Cardiac septum (tissue), 1 donor: ENCODE measurements at regions of chr6 and their contacts with region 1.

Region 1: GRCh38 chr6:44431118-44431725 is 43.7 kb downstream of the CDC5L start:
- DNase-seq: no peak

Region 2: DNA sequence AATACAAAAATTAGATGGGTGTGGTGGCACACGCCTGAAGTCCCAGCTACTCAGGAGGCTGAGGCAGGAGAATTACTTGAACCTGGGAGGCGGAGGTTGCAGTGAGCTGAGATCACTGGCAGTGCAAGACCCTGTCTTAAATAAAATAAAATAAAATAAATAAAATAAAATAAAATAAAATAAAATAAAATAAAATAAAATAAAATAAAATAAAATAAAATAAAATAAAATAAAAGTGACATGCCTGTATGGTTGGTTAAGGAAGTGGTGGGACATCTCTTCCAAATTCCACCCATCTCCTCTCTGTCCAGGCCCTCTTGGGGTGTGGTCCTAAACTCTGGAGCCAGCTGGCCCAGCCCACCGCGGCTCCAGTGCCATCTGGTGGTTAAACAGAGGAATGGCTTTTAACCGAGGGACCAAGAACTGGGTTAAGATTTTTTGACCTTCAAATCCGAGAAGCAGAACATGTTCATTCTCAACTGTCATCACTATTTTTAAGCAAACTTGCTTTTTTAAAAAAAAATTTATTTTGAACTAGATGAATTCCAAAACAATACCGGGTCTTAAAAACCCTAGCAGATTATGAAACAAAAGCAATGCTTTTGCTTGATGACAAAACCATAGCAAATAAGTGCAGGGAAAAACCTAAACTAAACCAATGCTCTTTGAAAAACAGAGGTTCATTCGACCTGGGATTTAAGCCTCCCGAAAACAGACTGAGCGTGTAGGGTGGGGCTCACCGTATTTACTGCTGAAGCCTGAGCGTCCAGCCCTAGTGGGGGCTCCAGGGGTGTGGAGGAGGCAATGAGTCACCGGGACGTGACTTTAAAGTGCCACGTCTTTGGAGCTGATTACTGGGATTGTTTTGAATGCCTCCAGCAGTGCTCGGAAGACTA is 25.1 kb after region 1 on chr6:
- intact Hi-C with region 1: loop called (anchors 2 kb)
- DNase-seq: no peak

Region 3: DNA sequence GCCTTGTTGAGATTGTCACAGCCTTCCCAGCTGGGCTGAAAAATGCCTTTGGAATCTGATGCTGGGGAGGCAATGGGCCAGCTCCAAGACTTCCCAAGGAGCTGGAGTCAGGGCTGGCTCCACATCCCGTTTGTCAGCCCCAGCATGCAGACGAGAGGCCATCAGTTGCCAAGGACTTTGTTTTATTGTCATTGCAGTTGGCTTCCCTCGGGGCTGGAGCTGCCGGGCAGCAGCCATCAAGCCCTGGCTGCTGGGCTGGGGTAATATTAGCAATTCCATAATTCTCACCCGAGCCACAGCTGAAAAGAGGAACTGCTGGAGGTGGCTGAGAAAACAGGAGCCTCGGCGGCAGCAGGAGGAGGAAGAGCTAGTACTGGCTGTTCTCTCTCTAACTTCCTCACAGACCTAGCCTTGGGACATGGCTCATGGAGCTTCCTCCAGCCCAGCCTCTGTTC is 138.7 kb after region 1 on chr6:
- intact Hi-C with region 1: no loop called
- DNase-seq: no peak